ENCODE measurements at regions of chr17 and their contacts with region 1.

Region 1: GRCh38 chr17:81401723-81402529 is 6.7 kb downstream of the BAHCC1 start:
- DNase-seq: peak; percentile 69 to 81
- ATAC-seq: peak in 1 of 2 experiments; percentile 54; a peak in 3 of 6 replicates
- H3K4me3 ChIP-seq: no peak overlapping the region
- H3K27ac ChIP-seq: peak overlapping the region; percentile 16 to 98; a peak in 3 of 6 replicates
- H3K4me1 ChIP-seq: peaks cover 49% of the 10 kb centered on the region
- CTCF ChIP-seq: peak; percentile 55
- EP300 ChIP-seq: no peak
- POLR2A ChIP-seq: no peak
- RAD21 ChIP-seq: peak; percentile 64 to 67

Region 2: DNA sequence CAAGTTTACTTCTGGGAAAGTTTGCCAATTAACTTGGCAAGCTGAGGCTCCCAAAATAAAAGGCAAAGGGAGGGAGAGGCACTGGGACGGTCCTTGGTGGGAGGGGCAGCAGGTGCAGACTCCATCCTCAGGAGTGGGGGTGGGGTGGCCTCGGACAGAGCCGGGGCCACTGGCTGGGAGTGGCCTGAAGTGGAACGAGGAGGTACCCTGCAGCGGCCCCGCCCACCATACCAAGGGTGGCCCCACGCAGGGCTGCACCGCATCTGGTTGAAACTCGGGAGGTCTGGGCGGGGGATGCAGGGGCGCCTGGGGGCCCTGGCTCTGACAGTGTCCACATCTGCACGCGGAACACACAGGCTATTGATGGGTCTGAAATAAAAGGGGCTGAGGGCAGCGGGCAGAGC is 64.4 kb before region 1 on chr17:
- CTCF ChIA-PET with region 1: interaction called, 10 read pairs
- POLR2A ChIA-PET with region 1: no interaction called
- DNase-seq: peak; percentile 47 to 76
- ATAC-seq: peak; percentile 27 to 30; a peak in 4 of 6 replicates
- H3K4me3 ChIP-seq: no peak overlapping the region
- H3K27ac ChIP-seq: peak overlapping the region; percentile 23 to 96; a peak in 5 of 6 replicates
- H3K4me1 ChIP-seq: peaks cover 76% of the 10 kb centered on the region
- CTCF ChIP-seq: no peak
- EP300 ChIP-seq: no peak
- POLR2A ChIP-seq: no peak
- RAD21 ChIP-seq: no peak

Region 3: DNA sequence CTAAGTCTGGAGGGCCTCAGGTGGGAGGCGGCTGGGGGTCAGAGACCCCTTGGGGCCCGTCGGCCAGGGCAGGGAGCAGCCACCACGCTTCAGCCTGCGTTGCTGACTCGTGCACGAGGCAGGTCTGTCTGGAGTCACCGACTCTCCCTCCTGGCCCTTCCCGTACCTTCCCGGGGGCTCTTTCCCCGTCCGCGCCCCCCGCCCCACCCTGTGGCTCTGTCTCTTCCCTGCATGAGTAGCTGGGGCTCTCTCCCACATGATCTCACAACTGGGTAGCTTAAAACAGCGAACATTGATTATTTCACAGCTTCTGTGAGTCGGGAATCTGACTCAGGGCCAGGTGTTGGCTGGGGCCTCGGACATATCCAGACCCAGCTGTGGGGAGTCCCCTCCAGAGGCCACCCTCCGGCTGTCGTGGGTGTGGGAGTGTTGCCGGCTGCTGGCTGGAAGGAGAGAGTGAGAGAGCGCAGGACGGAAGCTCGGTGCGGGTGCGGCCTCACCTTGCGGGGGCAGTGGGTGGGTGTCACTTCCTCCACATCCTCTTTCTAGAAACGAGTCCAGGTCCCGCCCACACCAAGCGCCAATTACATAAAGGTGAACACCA is 10.7 kb after region 1 on chr17:
- CTCF ChIA-PET with region 1: interaction called, 33 read pairs
- POLR2A ChIA-PET with region 1: no interaction called
- DNase-seq: no peak
- ATAC-seq: no peak
- H3K4me3 ChIP-seq: no peak overlapping the region
- H3K27ac ChIP-seq: peak overlapping the region in 1 of 2 experiments; percentile 45; a peak in 3 of 6 replicates
- H3K4me1 ChIP-seq: peaks cover 24% of the 10 kb centered on the region
- CTCF ChIP-seq: no peak
- EP300 ChIP-seq: no peak
- POLR2A ChIP-seq: no peak
- RAD21 ChIP-seq: no peak